ENCODE measurements at regions of chr6 and their contacts with region 1.

Region 1: DNA sequence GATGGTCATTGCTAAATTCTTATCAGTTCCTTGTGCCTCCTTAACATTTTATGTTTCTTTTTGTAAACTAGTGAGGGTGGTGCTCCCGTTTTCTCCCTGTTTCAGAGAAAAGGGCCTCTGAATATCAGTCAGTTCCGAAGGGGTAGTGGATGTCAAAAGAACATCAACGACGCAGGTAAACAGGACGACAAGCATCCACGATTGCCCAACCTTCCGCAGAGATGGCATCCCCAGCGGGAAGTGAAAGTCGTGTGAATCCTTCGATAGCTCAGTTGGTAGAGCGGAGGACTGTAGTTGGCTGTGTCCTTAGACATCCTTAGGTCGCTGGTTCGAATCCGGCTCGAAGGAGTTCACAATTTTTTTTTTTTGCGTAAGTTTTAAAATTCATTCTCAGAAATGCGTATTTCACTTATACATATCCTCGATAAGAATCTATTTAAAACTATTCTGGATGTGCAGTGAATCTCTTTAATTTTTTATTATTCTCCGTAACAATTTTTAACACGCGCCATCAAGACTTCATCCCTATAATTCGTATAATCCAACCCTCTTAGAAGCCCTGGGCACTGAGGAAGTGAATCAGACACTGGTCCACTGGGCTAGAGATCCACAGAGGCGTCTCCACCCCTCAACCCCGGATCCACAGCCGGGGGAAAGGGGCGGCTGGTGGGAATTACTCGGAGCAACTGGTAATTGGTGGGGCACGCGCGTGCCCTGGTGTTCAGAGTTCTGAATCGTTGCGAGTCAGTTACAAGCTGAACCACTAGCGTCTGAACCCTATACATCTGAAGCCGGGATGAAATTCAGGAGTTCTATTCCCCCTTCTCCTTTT is 27.9 kb upstream of the ABT1 start:
- DNase-seq: peak; percentile 97
- H3K4me3 ChIP-seq: peak overlapping the region; percentile 52 to 59 (median 54)
- H3K27ac ChIP-seq: peak overlapping the region; percentile 50 to 76 (median 71)
- H3K4me1 ChIP-seq: peaks cover 0 to 14% (median 5%) of the 10 kb centered on the region in 4 donors
- H3K27me3 ChIP-seq: no peaks in the 10 kb centered on the region
- CTCF ChIP-seq: no peak
- EP300 ChIP-seq: no peak
- POLR2A ChIP-seq: no peak

Region 2: DNA sequence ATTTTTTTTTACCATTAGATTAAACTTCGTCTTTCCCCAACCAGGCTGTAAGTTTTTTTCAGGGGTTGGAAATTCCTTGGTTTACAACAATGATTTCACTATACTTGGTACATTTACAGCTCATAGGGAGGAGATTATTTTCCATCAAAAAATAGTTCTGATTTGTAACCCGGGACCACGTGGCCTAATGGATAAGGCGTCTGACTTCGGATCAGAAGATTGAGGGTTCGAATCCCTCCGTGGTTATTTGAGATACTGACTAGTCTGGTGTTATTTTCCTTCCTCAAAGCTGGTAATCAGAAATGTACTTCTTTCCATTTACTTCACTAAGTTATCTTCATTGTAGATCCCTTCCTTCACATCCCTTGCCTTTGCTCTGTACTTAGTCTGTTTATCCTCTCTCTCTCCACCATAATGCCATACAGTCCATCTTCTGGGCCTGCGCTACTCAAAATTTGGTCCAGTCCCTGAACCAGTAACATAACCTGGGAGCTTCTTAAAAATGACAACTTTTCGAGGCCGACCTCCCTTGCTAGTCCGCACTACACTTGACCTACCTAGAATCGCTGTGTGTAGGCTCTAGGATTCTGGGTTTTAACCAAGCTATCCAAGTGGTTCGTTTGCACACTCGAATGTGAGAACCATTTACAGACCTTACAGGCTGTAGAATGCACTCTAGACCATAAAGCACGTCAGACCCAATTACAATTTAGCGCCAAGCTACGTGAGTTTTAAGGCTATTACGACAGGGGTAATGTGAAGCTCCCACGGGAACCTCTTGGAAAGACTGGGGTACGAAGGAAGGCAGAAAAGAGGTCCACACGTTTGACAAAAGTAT is 246.0 kb before region 1 on chr6:
- intact Hi-C with region 1: no loop called
- DNase-seq: no peak
- H3K4me3 ChIP-seq: peak overlapping the region; percentile 17 to 46 (median 42)
- H3K27ac ChIP-seq: no peak overlapping the region
- H3K4me1 ChIP-seq: peaks cover 0 to 9% (median 4%) of the 10 kb centered on the region in 4 donors
- H3K27me3 ChIP-seq: peaks cover 27 to 82% (median 53%) of the 10 kb centered on the region in 3 donors
- CTCF ChIP-seq: no peak
- EP300 ChIP-seq: no peak
- POLR2A ChIP-seq: no peak

Region 3: GRCh38 chr6:26342106-26343004 is 226.5 kb before region 1 on chr6:
- intact Hi-C with region 1: loop called (anchors 5 kb)
- DNase-seq: no peak
- H3K4me3 ChIP-seq: no peak overlapping the region
- H3K27ac ChIP-seq: no peak overlapping the region
- H3K4me1 ChIP-seq: peaks cover 0 to 4% (median 0%) of the 10 kb centered on the region in 4 donors
- H3K27me3 ChIP-seq: peaks cover 0 to 20% (median 3%) of the 10 kb centered on the region in 3 donors
- CTCF ChIP-seq: no peak
- EP300 ChIP-seq: no peak
- POLR2A ChIP-seq: no peak

Region 4: GRCh38 chr6:26394289-26394688 is 174.5 kb before region 1 on chr6:
- intact Hi-C with region 1: no loop called
- DNase-seq: no peak
- H3K4me3 ChIP-seq: no peak overlapping the region
- H3K27ac ChIP-seq: no peak overlapping the region
- H3K4me1 ChIP-seq: no peaks in the 10 kb centered on the region
- H3K27me3 ChIP-seq: no peaks in the 10 kb centered on the region
- CTCF ChIP-seq: no peak
- EP300 ChIP-seq: no peak
- POLR2A ChIP-seq: no peak

Region 5: DNA sequence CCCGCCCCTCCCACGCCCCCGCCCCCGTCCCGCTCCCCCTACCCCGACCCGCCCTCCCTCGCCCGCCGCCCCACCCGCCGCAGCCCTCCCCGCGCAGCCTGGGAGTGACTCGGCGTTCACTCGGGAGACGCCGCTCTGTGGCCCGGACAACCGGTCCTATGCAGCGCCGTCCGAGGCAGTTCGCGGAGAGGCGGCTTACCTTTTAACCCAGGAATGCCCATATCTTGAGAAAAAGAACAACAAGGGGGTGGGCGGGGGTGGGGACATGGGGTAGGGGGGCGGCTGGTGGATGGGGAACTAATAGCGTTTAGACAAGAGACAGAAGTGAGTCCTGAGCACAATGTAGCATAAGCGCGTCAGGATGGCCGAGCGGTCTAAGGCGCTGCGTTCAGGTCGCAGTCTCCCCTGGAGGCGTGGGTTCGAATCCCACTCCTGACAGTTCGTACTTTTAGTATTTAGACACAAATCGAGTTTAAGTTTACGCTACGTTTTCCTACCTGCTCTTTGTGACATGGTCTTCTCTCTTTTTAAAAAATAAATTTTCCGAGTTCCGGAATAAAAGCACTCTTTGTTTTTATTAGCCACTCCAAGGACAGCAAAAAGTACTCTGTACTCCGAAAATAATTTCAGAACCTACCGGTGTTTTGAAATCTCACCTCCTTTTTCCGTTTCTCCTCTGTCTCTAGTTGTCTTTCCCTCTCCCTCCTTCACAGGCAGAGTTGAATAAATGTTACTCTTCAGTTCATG is 47.8 kb before region 1 on chr6:
- intact Hi-C with region 1: loop called (anchors 5 kb)
- DNase-seq: peak; percentile 95
- H3K4me3 ChIP-seq: peak overlapping the region; percentile 55 to 65 (median 61)
- H3K27ac ChIP-seq: peak overlapping the region; percentile 96 to 99 (median 98)
- H3K4me1 ChIP-seq: peaks cover 0 to 32% (median 6%) of the 10 kb centered on the region in 4 donors
- H3K27me3 ChIP-seq: no peaks in the 10 kb centered on the region
- CTCF ChIP-seq: no peak
- EP300 ChIP-seq: no peak
- POLR2A ChIP-seq: no peak

Region 6: DNA sequence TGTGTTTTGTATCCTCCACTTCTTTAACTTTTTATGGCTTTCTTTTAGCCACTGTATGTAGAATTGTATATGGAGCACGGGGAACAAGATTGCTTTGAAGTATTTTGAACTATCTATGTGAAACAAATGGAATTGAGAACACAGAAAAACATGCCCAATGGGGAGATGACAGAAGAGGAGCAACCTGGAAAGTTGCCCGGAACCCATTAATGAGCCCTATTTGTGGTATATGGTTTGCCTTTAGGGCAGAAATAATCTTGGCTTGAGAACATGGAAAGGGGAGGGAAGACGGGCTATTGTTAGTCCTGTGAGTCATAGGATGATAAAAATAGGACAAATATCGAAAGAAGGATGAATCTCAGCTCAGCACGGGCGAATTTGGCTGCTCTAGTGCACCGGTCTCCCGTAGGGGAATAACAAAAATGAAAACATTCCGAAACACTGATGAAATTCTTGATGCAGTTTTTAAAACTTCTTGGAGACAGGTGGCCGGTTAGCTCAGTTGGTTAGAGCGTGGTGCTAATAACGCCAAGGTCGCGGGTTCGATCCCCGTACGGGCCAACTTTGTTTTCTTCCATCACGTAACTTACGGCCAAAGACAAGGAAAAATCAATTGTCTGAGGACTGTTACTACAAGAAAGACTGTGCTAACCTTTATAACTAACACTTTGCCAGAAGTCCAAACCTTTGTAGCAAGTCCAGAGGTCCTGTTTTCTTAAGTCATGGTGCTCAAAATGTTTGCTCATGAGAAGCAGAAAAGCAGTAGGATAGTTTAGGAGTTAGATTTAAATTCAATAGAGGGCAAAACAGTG is 15.0 kb before region 1 on chr6:
- intact Hi-C with region 1: loop called (anchors 1 kb)
- DNase-seq: peak; percentile 91
- H3K4me3 ChIP-seq: peak overlapping the region; percentile 36 to 51 (median 48)
- H3K27ac ChIP-seq: peak overlapping the region; percentile 69 to 89 (median 79)
- H3K4me1 ChIP-seq: peaks cover 4 to 24% (median 9%) of the 10 kb centered on the region in 4 donors
- H3K27me3 ChIP-seq: no peaks in the 10 kb centered on the region
- CTCF ChIP-seq: no peak
- EP300 ChIP-seq: no peak
- POLR2A ChIP-seq: no peak

Region 7: GRCh38 chr6:26596579-26597388 is 28.0 kb after region 1 on chr6 and contains the start of gene ABT1:
- intact Hi-C with region 1: loop called (anchors 1 kb)
- DNase-seq: peak; percentile 99
- H3K4me3 ChIP-seq: peak within 1 kb of the TSS; percentile 51 to 93 (median 84)
- H3K27ac ChIP-seq: peak within 1 kb of the TSS; percentile 84 to 93 (median 88)
- H3K4me1 ChIP-seq: peaks cover 0 to 25% (median 13%) of the 10 kb centered on the region in 4 donors
- H3K27me3 ChIP-seq: peaks cover 12 to 31% (median 26%) of the 10 kb centered on the region in 3 donors
- CTCF ChIP-seq: no peak
- EP300 ChIP-seq: no peak
- POLR2A ChIP-seq: peak; percentile 48 to 88
- total RNA-seq, gene ABT1: 10.2 to 19.4 (median 15.8) TPM

Region 8: DNA sequence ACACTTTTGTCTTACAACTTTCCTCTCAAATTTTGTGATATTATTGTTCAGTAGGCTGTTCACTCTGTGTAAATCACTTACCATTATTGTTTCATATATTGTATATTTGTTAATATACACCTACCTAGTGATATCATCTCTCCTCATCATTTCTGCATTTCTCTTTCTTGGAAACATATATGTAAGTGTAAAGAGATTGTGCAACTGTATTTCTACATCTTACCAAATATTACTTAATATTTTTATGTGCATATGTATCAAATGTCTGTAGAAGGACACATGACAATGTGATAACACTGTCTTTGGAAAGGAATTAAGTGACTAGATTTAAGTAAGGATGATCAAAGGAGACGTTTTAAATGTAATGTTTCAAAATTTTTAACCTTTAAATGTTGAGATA is 60.5 kb after region 1 on chr6:
- intact Hi-C with region 1: no loop called
- DNase-seq: no peak
- H3K4me3 ChIP-seq: no peak overlapping the region
- H3K27ac ChIP-seq: no peak overlapping the region
- H3K4me1 ChIP-seq: no peaks in the 10 kb centered on the region
- H3K27me3 ChIP-seq: no peaks in the 10 kb centered on the region
- CTCF ChIP-seq: no peak
- EP300 ChIP-seq: no peak
- POLR2A ChIP-seq: no peak

Region 9: DNA sequence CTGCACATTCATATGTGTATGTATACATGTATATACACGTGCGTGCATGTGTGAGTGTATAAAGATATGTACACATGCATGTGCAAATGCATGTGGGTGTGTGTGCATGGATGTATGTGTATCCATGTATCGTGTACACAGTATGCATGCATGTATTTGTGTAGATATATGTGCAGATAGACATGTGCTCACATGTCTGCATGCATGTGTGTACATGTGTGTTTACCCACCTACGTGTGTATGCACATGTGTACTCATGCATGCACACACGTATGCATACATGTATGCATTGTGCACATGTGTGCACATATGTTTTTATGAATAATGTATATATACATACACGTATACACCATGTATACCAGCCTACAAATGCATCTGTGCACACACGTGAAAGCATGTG is 171.0 kb after region 1 on chr6:
- intact Hi-C with region 1: no loop called
- DNase-seq: no peak
- H3K4me3 ChIP-seq: no peak overlapping the region
- H3K27ac ChIP-seq: no peak overlapping the region
- H3K4me1 ChIP-seq: no peaks in the 10 kb centered on the region
- H3K27me3 ChIP-seq: peaks cover 3 to 20% (median 17%) of the 10 kb centered on the region in 3 donors
- CTCF ChIP-seq: no peak
- EP300 ChIP-seq: no peak
- POLR2A ChIP-seq: no peak

Region 10: DNA sequence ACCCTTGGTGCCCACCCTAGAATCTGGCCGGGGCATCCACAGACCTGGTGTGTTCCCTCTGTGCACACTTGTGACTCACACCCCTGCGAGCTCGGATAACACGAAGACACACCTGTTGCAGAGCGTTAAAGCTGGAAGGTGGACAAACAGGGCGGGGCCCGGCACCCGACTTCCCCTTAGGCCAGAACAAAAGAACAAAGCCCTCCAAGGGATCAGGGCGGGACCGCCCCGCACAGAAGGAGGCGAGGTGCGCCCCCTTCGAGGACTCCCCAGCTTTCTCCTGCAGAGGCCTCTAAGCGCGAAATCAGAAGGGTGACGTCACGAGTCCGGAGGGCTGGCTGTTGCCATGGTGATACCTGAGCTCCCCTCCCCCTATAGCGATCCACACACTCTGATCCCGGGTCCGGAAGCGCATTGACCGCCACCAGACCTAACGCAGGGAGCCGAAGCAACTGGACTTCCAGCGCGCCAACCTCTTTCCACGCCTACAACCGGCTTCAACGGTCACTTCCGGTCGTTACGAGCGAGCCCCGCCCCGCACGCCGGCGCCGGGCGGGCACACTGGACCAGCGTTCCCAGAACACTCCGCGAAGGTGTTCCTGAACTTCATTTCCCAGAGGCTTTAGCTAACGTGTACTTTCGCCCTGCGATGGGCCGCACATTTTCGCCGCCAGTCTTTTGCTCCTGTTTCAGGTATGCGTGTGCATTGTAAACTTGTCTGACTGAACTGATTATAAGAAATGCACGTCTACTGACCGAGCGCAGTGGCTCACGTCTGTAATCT is 904.0 kb after region 1 on chr6 and contains the start of gene ZNF184:
- intact Hi-C with region 1: loop called (anchors 10 kb)
- DNase-seq: peak; percentile 98
- H3K4me3 ChIP-seq: peak within 1 kb of the TSS; percentile 54 to 86 (median 84)
- H3K27ac ChIP-seq: peak within 1 kb of the TSS; percentile 89 to 92 (median 90)
- H3K4me1 ChIP-seq: peaks cover 0 to 23% (median 20%) of the 10 kb centered on the region in 4 donors
- H3K27me3 ChIP-seq: no peaks in the 10 kb centered on the region
- CTCF ChIP-seq: peak in 1 of 4 experiments; percentile 31
- EP300 ChIP-seq: peak in 2 of 4 donors; percentile 8 to 57
- POLR2A ChIP-seq: peak; percentile 66 to 75
- total RNA-seq, gene ZNF184: 4.3 to 8.6 (median 7.3) TPM

Measured in sigmoid colon (tissue), 7 donors.